Left ventricle myocardium inferior (tissue), 1 donor: ENCODE measurements at regions of chr3 and their contacts with region 1.

Region 1: GRCh38 chr3:182105875-182106274 is 394.1 kb downstream of the SOX2 start:
- DNase-seq: no peak
- H3K4me3 ChIP-seq: no peak overlapping the region
- H3K27ac ChIP-seq: no peak overlapping the region
- H3K4me1 ChIP-seq: no peaks in the 10 kb centered on the region
- H3K27me3 ChIP-seq: no peaks in the 10 kb centered on the region
- CTCF ChIP-seq: no peak

Region 2: DNA sequence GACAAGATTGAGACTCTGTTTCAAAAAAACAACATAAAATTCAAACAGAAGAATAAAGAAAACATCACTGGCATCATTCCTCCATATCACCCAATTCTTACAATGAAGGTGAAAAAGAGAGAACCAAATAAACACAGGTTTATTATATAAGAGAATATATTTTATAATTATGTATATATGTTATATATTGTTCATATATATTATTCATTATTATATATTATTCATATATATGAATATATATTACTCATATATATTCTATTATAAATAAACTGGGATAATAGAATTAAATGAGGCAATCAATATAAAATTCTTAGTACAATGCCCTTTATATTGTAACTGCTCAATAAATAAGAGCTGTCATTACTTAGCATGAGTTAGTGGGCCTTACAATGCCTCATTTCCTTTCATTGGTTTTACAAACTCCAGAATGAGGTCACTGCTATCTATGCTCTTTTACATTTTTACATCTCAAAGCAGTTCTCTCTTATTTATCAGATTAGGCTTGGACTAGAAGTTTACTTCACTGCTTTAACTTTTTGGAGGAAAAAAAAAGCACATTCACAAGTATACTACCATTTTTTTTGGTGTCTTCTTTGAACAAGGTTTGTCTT is 1639.4 kb before region 1 on chr3:
- intact Hi-C with region 1: loop called (anchors 10 kb)
- DNase-seq: no peak
- H3K4me3 ChIP-seq: no peak overlapping the region
- H3K27ac ChIP-seq: no peak overlapping the region
- H3K4me1 ChIP-seq: no peaks in the 10 kb centered on the region
- H3K27me3 ChIP-seq: no peaks in the 10 kb centered on the region
- CTCF ChIP-seq: no peak